A549 (cell line): ENCODE measurements at regions of chr18 and their contacts with region 1.

Region 1: DNA sequence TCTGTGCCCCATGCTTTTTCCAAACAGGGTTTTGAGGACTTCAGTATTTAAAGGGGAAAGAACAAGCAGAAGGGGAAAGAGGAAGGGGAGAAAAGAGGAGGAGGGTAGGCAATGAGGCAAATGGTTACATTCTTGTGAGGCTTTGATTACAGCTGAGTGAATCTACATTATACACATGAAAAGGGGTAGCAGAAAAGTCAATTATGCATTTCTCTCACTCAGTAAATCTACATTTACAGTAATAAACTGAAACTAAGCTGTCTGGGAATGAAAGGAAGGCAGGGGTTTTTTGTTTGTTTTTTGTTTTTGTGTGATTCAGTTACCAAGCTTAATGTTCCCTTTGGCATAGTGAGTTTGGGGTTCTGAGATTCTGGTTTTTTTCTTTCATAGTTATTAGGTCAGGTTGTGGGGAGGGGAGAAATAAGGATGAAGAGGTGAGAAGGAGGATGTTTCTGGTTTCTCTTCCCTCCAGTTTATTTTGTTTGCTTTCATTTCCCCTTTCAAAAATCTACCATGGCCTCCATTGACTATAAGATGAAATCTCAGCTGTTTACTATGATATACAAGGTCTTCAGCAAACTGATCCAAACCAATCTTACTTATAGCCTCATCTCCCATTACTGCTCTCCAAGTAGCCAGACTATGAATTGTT is 18.7 kb downstream of the C18orf63 start:
- DNase-seq: no peak
- ATAC-seq: no peak
- H3K4me3 ChIP-seq: no peak overlapping the region
- H3K27ac ChIP-seq: no peak overlapping the region
- H3K4me1 ChIP-seq: no peaks in the 10 kb centered on the region
- CTCF ChIP-seq: no peak
- EP300 ChIP-seq: no peak
- POLR2A ChIP-seq: no peak
- RAD21 ChIP-seq: no peak

Region 2: DNA sequence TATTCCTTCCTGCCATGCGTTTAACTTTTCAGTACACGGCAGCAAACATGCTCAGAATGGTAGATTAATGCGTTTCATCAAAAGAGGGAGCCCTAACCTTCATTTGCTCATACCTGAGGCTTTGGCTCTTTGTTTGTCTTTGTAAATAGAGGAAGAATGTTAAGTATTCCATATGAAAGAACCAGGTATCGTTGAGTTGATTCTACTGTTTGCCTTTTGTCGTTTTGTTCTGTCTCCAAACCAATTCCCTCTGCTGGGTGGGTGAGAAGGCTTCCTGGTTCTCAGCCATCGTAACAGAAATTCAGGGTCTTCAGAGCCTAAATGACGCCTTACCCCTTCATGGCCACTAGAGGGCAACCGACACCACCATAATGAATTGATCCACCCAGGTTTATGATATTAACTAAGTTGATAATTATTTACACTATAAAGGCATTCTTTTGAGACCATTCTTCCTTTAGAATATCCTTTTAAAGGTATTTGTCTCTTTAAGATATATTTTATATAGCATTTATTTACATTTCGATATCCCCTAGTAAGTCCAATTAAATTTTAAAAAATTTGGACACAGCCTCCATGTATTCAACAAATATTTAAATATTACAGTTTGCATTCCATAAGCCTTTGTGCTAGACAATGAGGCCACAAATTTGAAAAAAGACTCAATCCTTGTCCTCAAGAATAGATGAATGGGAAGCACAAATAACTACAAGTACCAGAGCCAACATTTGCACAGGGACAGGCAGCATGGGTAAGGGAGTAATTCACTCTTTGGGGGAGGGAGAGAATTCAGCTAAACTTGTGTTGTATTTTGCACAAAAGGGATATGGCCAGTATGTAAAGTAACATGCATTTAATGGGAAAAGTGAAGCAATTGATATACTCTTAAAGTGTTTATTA is 137.9 kb before region 1 on chr18:
- CTCF ChIA-PET with region 1: interaction called, 11 read pairs
- POLR2A ChIA-PET with region 1: no interaction called
- DNase-seq: peak; percentile 65 to 77
- ATAC-seq: peak; percentile 80 to 89
- H3K4me3 ChIP-seq: peak overlapping the region; percentile 33; the same call in 2 of the 3 replicates
- H3K27ac ChIP-seq: peak overlapping the region; percentile 71 to 84
- H3K4me1 ChIP-seq: peaks cover 10% of the 10 kb centered on the region
- CTCF ChIP-seq: peak; percentile 93
- EP300 ChIP-seq: no peak
- POLR2A ChIP-seq: no peak
- RAD21 ChIP-seq: peak; percentile 79 to 94